PC-9 (cell line): ENCODE measurements at regions of chr20 and their contacts with region 1.

Region 1: GRCh38 chr20:50292324-50293243 is 102.0 kb downstream of the CEBPB start:
- DNase-seq: peak; percentile 86 to 92
- H3K4me3 ChIP-seq: no peak overlapping the region; the same call in 1 of the 2 replicates
- H3K27ac ChIP-seq: peak overlapping the region; percentile 86
- H3K4me1 ChIP-seq: peaks cover 46% of the 10 kb centered on the region
- H3K27me3 ChIP-seq: no peaks in the 10 kb centered on the region
- CTCF ChIP-seq: no peak

Region 2: GRCh38 chr20:50308513-50309279 is 16.1 kb after region 1 on chr20:
- CTCF ChIA-PET with region 1: no interaction called
- POLR2A ChIA-PET with region 1: no interaction called
- intact Hi-C with region 1: loop called (anchors 2 kb)
- DNase-seq: peak; percentile 76 to 83
- H3K4me3 ChIP-seq: peak overlapping the region; percentile 51
- H3K27ac ChIP-seq: peak overlapping the region; percentile 95
- H3K4me1 ChIP-seq: peaks cover 98% of the 10 kb centered on the region
- H3K27me3 ChIP-seq: no peaks in the 10 kb centered on the region
- CTCF ChIP-seq: no peak

Region 3: GRCh38 chr20:51569827-51570738 is 1277.5 kb after region 1 on chr20:
- CTCF ChIA-PET with region 1: no interaction called
- POLR2A ChIA-PET with region 1: no interaction called
- intact Hi-C with region 1: no loop called
- DNase-seq: peak in 1 of 2 experiments; percentile 55
- H3K4me3 ChIP-seq: no peak overlapping the region
- H3K27ac ChIP-seq: no peak overlapping the region
- H3K4me1 ChIP-seq: peaks cover 7% of the 10 kb centered on the region
- H3K27me3 ChIP-seq: 0 out of 2 replicates have a peak, but pooled peaks cover 25% of the 10 kb centered on the region
- CTCF ChIP-seq: no peak

Region 4: GRCh38 chr20:51848346-51848745 is 1555.8 kb after region 1 on chr20:
- CTCF ChIA-PET with region 1: no interaction called
- POLR2A ChIA-PET with region 1: no interaction called
- intact Hi-C with region 1: no loop called
- DNase-seq: no peak
- H3K4me3 ChIP-seq: no peak overlapping the region
- H3K27ac ChIP-seq: no peak overlapping the region
- H3K4me1 ChIP-seq: no peaks in the 10 kb centered on the region
- H3K27me3 ChIP-seq: no peaks in the 10 kb centered on the region
- CTCF ChIP-seq: no peak